CD8-positive, alpha-beta memory T cell (primary cell): ENCODE measurements at regions of chr15 and their contacts with region 1.

Region 1: GRCh38 chr15:41283653-41284426 is 48.6 kb downstream of the OIP5 start:
- DNase-seq: peak; percentile 96 to 98 (median 97)
- H3K4me3 ChIP-seq: peak overlapping the region; percentile 80
- H3K4me3 Mint-ChIP-seq: peak overlapping the region; percentile 89 to 100 (median 92)
- H3K27ac ChIP-seq: peak overlapping the region; percentile 92
- H3K27ac Mint-ChIP-seq: peak overlapping the region; percentile 89 to 99 (median 98)
- H3K4me1 ChIP-seq: peaks cover 39% of the 10 kb centered on the region
- H3K4me1 Mint-ChIP-seq: peaks cover 45 to 52% (median 52%) of the 10 kb centered on the region in 3 donors
- H3K27me3 ChIP-seq: no peaks in the 10 kb centered on the region
- H3K27me3 Mint-ChIP-seq: peaks cover 0 to 5% of the 10 kb centered on the region in 2 donors

Region 2: DNA sequence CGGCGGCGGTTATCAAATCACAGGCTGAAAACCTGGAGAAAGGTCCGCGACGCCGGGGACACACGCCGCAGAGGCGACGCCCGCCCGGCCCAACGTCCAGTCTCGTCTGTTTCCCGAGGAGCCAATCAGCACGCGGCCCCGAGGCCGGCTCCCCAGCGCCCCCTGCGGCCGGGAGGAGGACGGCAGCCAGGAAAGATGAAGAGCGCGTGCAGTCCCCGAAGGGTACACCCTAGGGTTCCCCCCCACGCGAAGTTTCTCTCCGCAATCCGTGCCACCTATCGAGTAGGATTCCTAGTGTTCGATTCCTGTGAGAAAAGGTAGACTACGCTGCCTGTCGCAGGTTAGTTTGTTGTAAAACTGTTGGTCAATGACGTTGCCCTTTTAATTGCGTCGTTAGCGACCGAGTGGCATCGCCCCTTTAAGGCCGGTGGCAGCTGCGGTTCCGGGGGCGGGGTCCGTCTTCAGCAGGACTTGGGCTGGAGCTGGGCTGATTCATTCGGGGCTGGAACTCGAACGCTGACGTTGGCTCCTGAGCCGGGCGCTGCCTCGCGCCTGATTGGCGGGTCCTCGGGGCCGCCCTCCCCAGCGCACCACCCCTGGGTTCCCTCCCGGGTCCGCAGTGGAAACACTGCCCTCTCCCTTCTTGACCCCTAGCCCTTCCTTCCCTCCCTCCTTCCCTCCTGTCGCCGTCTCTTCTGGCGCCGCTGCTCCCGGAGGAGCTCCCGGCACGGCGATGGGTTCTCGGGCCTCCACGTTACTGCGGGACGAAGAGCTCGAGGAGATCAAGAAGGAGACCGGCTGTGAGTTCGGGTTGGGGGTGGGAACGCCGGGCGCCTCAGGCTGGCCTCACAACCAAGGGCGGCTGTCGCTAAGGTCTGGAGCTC is 52.9 kb before region 1 on chr15 and contains the starts of genes CHP1 and EXD1:
- CTCF ChIA-PET with region 1: interaction called, 3 read pairs
- POLR2A ChIA-PET with region 1: interaction called, 11 read pairs
- DNase-seq: peak; percentile 92 to 96 (median 92)
- H3K4me3 ChIP-seq: peak within 1 kb of the TSS; percentile 84
- H3K4me3 Mint-ChIP-seq: peak within 1 kb of the TSS; percentile 88 to 96 (median 90)
- H3K27ac ChIP-seq: peak within 1 kb of the TSS; percentile 84
- H3K27ac Mint-ChIP-seq: peak within 1 kb of the TSS; percentile 93 to 98 (median 94)
- H3K4me1 ChIP-seq: peaks cover 19% of the 10 kb centered on the region
- H3K4me1 Mint-ChIP-seq: peaks cover 26 to 49% (median 36%) of the 10 kb centered on the region in 3 donors
- H3K27me3 ChIP-seq: no peaks in the 10 kb centered on the region
- H3K27me3 Mint-ChIP-seq: no peaks in the 10 kb centered on the region
- total RNA-seq, gene CHP1: 41.6 to 42.1 TPM
- total RNA-seq, gene EXD1: not detected

Region 3: DNA sequence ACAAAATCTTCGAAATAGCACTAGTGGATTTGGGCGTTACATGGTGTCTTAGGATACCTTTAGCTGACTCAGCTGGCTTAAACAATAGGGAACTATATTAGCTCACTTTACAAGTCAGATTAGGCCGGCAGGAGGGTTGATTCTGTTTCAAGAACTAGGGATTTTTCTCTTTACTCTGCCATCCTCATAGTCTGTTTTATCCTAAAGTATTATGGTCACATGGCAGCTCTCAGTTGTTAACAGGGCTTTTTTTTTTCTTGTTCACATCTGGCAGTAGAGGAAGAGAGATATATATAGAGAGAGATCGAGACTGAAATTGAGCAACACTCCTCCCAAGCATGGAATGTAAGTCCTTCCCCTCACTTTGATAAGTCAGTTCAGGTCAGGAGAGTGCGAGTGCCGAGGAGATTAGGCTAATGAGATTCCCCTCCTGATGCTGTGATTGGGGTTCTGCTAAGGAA is 19.9 kb before region 1 on chr15:
- CTCF ChIA-PET with region 1: no interaction called
- POLR2A ChIA-PET with region 1: no interaction called
- DNase-seq: no peak
- H3K4me3 ChIP-seq: no peak overlapping the region
- H3K4me3 Mint-ChIP-seq: no peak overlapping the region
- H3K27ac ChIP-seq: no peak overlapping the region
- H3K27ac Mint-ChIP-seq: peak overlapping the region in 2 of 8 donors; percentile 64 to 78
- H3K4me1 ChIP-seq: no peaks in the 10 kb centered on the region
- H3K4me1 Mint-ChIP-seq: peaks cover 0 to 2% (median 0%) of the 10 kb centered on the region in 3 donors
- H3K27me3 ChIP-seq: no peaks in the 10 kb centered on the region
- H3K27me3 Mint-ChIP-seq: no peaks in the 10 kb centered on the region

Region 4: GRCh38 chr15:41331833-41332787 is 48.3 kb after region 1 on chr15 and contains the start of gene OIP5:
- CTCF ChIA-PET with region 1: no interaction called
- POLR2A ChIA-PET with region 1: interaction called, 13 read pairs
- DNase-seq: peak; percentile 95 to 99 (median 98)
- H3K4me3 ChIP-seq: peak within 1 kb of the TSS; percentile 98
- H3K4me3 Mint-ChIP-seq: peak within 1 kb of the TSS; percentile 90 to 100 (median 99)
- H3K27ac ChIP-seq: peak within 1 kb of the TSS; percentile 76
- H3K27ac Mint-ChIP-seq: peak within 1 kb of the TSS; percentile 64 to 97 (median 96)
- H3K4me1 ChIP-seq: peaks cover 8% of the 10 kb centered on the region
- H3K4me1 Mint-ChIP-seq: peaks cover 24 to 53% (median 37%) of the 10 kb centered on the region in 3 donors
- H3K27me3 ChIP-seq: no peaks in the 10 kb centered on the region
- H3K27me3 Mint-ChIP-seq: peaks cover 0 to 1% of the 10 kb centered on the region in 2 donors
- total RNA-seq, gene OIP5: 16.2 to 19.0 TPM

Region 5: DNA sequence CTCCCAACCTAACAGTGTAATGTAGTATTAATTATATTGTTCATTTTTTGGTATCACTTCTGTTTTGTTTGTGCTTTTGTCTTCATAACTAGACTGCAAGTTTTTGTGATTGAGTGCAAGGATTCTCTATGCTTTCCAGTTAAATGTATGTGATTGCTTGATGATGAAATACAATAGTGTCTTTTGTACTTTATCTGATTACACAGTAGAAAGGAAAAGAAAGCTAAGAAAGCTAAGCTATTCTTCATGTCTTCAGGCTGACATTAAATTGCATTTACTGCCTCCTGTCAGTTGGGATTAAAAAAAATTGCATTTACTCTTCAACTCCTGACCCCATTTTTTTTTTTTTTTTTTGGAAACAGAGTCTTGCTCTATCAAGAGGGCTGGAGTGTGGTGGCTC is 161.6 kb after region 1 on chr15:
- CTCF ChIA-PET with region 1: no interaction called
- POLR2A ChIA-PET with region 1: no interaction called
- DNase-seq: no peak
- H3K4me3 ChIP-seq: no peak overlapping the region
- H3K4me3 Mint-ChIP-seq: no peak overlapping the region
- H3K27ac ChIP-seq: no peak overlapping the region
- H3K27ac Mint-ChIP-seq: peak overlapping the region in 1 of 8 donors; percentile 26
- H3K4me1 ChIP-seq: no peaks in the 10 kb centered on the region
- H3K4me1 Mint-ChIP-seq: peaks cover 14 to 24% (median 22%) of the 10 kb centered on the region in 3 donors
- H3K27me3 ChIP-seq: no peaks in the 10 kb centered on the region
- H3K27me3 Mint-ChIP-seq: no peaks in the 10 kb centered on the region